Activated CD4-positive, alpha-beta T cell treated with anti-CD3 and anti-CD28 coated beads for 36 hours (primary cell): ENCODE measurements at regions of chr6 and their contacts with region 1.

Region 1: DNA sequence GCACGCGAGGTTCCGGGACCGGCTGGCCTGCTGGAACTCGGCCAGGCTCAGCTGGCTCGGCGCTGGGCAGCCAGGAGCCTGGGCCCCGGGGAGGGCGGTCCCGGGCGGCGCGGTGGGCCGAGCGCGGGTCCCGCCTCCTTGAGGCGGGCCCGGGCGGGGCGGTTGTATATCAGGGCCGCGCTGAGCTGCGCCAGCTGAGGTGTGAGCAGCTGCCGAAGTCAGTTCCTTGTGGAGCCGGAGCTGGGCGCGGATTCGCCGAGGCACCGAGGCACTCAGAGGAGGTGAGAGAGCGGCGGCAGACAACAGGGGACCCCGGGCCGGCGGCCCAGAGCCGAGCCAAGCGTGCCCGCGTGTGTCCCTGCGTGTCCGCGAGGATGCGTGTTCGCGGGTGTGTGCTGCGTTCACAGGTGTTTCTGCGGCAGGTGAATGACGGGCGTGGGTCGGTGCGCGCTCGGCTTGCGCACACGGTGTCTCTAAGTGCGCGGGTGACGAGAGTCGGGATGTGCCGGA is at the start of gene CDKN1A:
- DNase-seq: peak; percentile 88
- ATAC-seq: peak; percentile 61
- H3K4me3 Mint-ChIP-seq: peak within 1 kb of the TSS; percentile 85
- H3K27ac Mint-ChIP-seq: peak within 1 kb of the TSS; percentile 86
- H3K4me1 Mint-ChIP-seq: peaks cover 45% of the 10 kb centered on the region
- H3K27me3 Mint-ChIP-seq: peaks cover 12% of the 10 kb centered on the region
- total RNA-seq, gene CDKN1A: 31.3 to 35.9 TPM

Region 2: GRCh38 chr6:36027501-36028087 is 651.0 kb before region 1 on chr6 and contains the start of gene MAPK14:
- CTCF ChIA-PET with region 1: no interaction called
- POLR2A ChIA-PET with region 1: no interaction called
- intact Hi-C with region 1: loop called in 1 of 2 experiments (anchors 5 kb)
- DNase-seq: peak; percentile 99
- ATAC-seq: peak; percentile 92
- H3K4me3 Mint-ChIP-seq: peak within 1 kb of the TSS; percentile 98
- H3K27ac Mint-ChIP-seq: peak within 1 kb of the TSS; percentile 98
- H3K4me1 Mint-ChIP-seq: peaks cover 38% of the 10 kb centered on the region
- H3K27me3 Mint-ChIP-seq: peaks cover 19% of the 10 kb centered on the region
- total RNA-seq, gene MAPK14: 39.1 to 44.0 TPM

Region 3: DNA sequence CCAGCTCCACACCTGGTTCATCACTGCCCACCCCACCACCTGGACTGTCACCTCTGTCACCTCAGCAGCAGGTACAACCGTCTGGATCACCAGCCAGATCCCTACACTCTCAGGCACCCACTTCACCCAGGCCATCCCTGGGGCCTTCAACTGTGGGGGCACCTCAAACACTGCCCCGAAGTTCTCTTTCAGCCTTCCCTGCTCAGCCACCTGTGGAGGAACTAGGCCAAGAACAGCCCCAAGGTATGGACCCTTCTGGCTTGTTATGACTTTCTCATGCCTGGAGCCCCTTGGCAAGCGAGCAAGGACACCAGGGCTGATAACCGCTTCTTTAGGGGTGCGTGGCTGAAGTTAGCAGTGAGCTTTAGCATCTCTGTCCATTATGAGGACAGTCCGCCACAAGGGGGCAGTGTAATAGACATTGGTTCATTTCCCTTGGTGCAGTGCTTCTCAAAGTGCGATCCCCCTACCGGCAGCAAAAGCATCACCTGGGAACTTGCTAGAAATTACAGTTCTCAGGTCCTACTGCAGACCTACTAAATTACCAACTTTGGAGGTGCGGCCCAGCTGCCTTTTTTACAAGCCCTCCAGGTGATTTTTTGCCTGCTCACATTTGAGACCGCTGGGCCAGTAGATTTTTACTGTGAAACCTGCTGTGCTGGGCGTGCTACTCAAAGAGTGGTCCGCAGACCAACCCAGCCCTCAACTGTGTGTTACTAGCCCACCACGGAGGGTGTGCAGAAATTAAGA is 376.2 kb before region 1 on chr6:
- CTCF ChIA-PET with region 1: no interaction called
- POLR2A ChIA-PET with region 1: no interaction called
- intact Hi-C with region 1: loop called in 1 of 2 experiments (anchors 2 kb)
- DNase-seq: peak; percentile 96
- ATAC-seq: peak; percentile 99
- H3K4me3 Mint-ChIP-seq: no peak overlapping the region
- H3K27ac Mint-ChIP-seq: no peak overlapping the region
- H3K4me1 Mint-ChIP-seq: no peaks in the 10 kb centered on the region
- H3K27me3 Mint-ChIP-seq: peaks cover 3% of the 10 kb centered on the region

Region 4: DNA sequence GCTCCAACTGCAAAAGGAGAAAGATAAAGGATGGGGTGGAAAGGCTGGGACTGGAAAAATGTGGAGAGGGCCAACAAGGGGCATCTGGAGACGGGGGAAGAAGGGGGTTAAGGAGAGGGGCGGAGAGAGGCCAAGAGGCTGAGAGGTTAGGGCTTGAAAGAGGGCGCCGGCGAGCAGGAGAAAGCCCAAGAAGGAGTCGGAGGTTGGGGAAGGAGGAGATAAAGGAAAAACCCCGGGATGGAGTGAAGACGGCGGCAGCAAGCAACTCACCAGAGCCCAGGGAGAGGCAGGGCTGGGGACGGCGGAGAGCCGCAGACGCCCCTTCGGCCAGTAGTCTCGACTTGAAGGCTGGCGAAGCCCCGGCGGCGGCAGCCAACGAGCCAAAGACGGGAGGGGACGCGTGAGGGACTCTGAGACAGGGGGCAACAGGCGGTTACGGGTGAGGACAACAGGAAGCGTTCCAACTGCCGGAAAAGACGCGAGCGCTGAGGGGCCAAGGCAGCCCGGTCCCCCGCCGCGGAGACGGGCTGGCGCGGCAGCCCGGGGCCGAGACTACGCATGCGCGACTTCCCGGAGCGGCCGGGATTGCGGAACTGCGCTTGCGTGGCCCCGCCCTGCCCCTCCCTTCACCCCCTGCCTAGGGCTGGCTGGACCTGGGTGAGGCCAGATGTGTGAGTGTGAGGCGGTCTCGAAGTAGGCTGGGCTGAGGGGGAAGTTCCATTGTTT is 131.5 kb before region 1 on chr6 and contains the start of gene STK38:
- CTCF ChIA-PET with region 1: no interaction called
- POLR2A ChIA-PET with region 1: no interaction called
- intact Hi-C with region 1: loop called in 1 of 2 experiments (anchors 1 kb)
- DNase-seq: peak; percentile 97
- ATAC-seq: peak; percentile 90
- H3K4me3 Mint-ChIP-seq: peak within 1 kb of the TSS; percentile 94
- H3K27ac Mint-ChIP-seq: peak within 1 kb of the TSS; percentile 97
- H3K4me1 Mint-ChIP-seq: peaks cover 36% of the 10 kb centered on the region
- H3K27me3 Mint-ChIP-seq: no peaks in the 10 kb centered on the region
- total RNA-seq, gene STK38: 24.0 to 27.0 TPM

Region 5: DNA sequence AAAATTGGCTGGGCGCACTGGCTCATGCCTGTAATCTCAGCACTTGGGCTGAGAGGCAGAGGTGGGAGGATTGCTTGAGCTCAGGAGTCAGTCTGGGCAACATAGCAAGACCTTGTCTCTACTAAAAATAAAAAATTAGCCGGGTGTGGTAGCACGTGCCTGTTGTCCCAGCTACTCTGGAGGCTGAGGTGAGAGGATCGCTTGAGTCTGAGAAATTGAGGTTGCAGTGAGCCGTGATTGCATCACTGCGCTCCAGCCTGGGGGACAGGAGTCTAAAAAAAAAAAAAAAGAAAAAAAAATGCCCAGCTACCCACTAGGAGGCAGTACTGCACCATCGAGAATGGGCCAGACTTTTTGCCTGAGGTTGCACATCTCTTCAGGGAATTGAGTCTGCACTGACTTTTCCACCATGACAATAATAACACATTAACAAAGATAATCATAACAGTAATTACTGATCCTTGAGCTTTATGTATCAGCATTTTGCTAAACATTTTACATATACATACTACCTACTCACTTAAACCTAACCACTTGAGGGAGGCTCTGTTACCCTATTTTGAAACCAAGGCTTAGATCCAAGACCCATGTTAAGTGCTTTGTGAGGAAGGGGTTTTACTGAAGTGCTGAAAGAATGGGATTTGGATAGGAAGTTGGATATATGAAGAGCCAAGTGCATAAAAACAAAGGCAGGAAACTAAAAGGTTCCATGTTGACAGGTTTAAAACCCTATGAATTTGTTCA is 63.4 kb before region 1 on chr6:
- CTCF ChIA-PET with region 1: interaction called, 12 read pairs
- POLR2A ChIA-PET with region 1: interaction called, 3 read pairs
- intact Hi-C with region 1: loop called in 1 of 2 experiments (anchors 1 kb)
- DNase-seq: peak; percentile 71
- ATAC-seq: peak; percentile 67
- H3K4me3 Mint-ChIP-seq: no peak overlapping the region
- H3K27ac Mint-ChIP-seq: peak overlapping the region; percentile 24
- H3K4me1 Mint-ChIP-seq: peaks cover 13% of the 10 kb centered on the region
- H3K27me3 Mint-ChIP-seq: no peaks in the 10 kb centered on the region

Region 6: GRCh38 chr6:36759148-36759759 is 80.7 kb after region 1 on chr6:
- CTCF ChIA-PET with region 1: interaction called, 11 read pairs
- POLR2A ChIA-PET with region 1: interaction called, 7 read pairs
- intact Hi-C with region 1: loop called (anchors 1 to 2 kb)
- DNase-seq: peak; percentile 91
- ATAC-seq: peak; percentile 33
- H3K4me3 Mint-ChIP-seq: no peak overlapping the region
- H3K27ac Mint-ChIP-seq: no peak overlapping the region
- H3K4me1 Mint-ChIP-seq: peaks cover 43% of the 10 kb centered on the region
- H3K27me3 Mint-ChIP-seq: peaks cover 3% of the 10 kb centered on the region

Region 7: GRCh38 chr6:36912586-36912985 is 234.0 kb after region 1 on chr6:
- CTCF ChIA-PET with region 1: no interaction called
- POLR2A ChIA-PET with region 1: no interaction called
- intact Hi-C with region 1: loop called in 1 of 2 experiments (anchors 1 kb)
- DNase-seq: peak; percentile 74
- ATAC-seq: peak; percentile 87
- H3K4me3 Mint-ChIP-seq: peak overlapping the region; percentile 37
- H3K27ac Mint-ChIP-seq: peak overlapping the region; percentile 83
- H3K4me1 Mint-ChIP-seq: peaks cover 44% of the 10 kb centered on the region
- H3K27me3 Mint-ChIP-seq: no peaks in the 10 kb centered on the region